SK-N-SH (cell line): ENCODE measurements at regions of chr11 and their contacts with region 1.

Region 1: GRCh38 chr11:75435581-75435945 is 2.6 kb upstream of the KLHL35 start:
- DNase-seq: no peak
- H3K4me3 ChIP-seq: no peak overlapping the region
- H3K27ac ChIP-seq: no peak overlapping the region
- H3K4me1 ChIP-seq: peaks cover 0 to 2% of the 10 kb centered on the region in 2 experiments; a peak in 1 of 4 replicates
- H3K27me3 ChIP-seq: peaks cover 7% of the 10 kb centered on the region
- CTCF ChIP-seq: no peak
- EP300 ChIP-seq: no peak
- RAD21 ChIP-seq: no peak

Region 2: DNA sequence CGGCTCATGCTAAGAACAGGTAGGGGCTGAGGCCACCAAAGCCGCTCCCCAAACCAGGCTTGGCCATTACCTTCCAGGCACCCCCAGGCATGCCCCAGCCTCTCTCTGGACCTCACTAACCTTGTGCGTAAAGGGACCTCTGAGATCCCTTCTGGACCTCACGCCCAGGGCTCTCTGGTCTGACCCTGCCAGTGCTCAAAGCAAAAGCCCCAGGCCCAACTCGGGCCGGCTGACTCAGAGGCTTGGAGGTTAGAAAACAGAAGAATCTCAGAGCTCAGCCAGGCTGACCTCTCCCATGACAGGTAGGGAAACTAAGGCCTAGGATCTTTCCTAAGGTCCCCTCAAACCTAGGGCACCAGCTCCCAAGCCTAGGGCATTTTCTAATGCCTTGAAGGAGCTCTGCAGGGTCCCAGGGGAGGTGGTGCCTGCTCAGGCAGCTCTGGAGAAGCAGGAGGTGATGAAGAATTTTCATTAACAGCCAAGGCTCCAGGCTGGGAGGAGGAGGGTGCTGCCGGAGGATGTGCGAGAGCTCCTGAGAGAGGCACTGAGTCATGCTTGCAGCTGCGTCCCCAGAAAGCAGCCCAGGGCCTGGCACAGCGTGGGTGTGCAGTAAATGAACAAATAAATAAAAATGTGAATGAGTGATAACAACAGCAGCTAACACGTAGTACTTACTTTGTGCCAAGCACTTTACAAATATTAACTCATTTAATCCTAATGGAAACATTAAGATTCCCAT is 109.7 kb before region 1 on chr11:
- CTCF ChIA-PET with region 1: no interaction called
- POLR2A ChIA-PET with region 1: no interaction called
- DNase-seq: no peak
- H3K4me3 ChIP-seq: no peak overlapping the region
- H3K27ac ChIP-seq: no peak overlapping the region
- H3K4me1 ChIP-seq: peaks cover 11 to 22% of the 10 kb centered on the region in 2 experiments; a peak in 3 of 4 replicates
- H3K27me3 ChIP-seq: no peaks in the 10 kb centered on the region
- CTCF ChIP-seq: no peak
- EP300 ChIP-seq: no peak
- RAD21 ChIP-seq: no peak

Region 3: DNA sequence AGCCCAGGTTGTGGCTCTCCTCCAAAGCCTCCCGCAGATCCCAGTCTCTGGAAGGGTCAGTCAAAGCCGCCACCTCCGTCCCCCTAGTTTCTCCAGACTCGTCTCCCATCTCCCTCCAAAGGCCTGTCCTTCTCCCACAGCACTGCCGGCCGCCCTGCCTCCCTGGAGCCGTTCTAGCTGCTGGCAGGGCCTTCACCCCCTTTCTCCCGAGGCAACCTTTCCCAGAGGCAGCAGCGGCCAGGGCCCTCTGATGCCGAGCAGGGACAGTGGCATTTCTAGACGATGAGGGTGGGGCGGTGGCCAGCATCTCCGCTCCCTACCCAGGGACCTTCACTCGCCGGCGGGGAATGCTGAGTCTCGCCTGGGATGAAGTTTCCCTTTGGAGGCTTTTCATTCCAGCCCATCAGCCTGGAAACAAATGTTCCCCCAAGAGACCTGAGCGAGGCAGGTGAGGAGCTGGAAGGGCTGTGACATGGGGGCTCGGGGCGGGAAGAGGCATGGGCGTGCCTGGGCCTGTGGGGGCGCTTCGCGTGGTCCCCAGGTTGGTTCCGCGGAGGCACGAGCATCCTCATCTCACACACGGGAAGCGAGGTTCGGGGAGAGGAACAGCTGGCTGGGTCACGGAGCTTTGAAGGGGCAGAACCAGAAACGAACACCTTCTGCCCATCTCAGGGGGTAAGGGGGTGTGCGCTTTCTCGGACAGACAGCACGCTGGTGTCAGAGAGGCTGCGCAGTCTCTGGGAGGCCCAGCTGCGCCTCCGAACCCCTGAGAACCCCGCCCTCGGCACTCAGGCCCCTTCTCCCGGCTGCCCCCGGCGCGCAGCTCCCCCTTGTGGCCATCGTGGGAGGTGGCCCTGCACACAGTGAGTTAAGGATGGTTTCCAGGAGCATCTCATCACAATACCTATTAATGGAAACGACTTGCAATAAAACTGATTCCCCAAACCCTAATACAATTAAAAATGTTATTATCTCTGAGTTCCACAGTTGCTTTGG is 15.6 kb after region 1 on chr11:
- CTCF ChIA-PET with region 1: interaction called, 66 read pairs
- POLR2A ChIA-PET with region 1: no interaction called
- DNase-seq: peak; percentile 68
- H3K4me3 ChIP-seq: no peak overlapping the region
- H3K27ac ChIP-seq: no peak overlapping the region
- H3K4me1 ChIP-seq: no peaks in the 10 kb centered on the region
- H3K27me3 ChIP-seq: no peaks in the 10 kb centered on the region
- CTCF ChIP-seq: peak; percentile 58
- EP300 ChIP-seq: no peak
- RAD21 ChIP-seq: no peak

Region 4: DNA sequence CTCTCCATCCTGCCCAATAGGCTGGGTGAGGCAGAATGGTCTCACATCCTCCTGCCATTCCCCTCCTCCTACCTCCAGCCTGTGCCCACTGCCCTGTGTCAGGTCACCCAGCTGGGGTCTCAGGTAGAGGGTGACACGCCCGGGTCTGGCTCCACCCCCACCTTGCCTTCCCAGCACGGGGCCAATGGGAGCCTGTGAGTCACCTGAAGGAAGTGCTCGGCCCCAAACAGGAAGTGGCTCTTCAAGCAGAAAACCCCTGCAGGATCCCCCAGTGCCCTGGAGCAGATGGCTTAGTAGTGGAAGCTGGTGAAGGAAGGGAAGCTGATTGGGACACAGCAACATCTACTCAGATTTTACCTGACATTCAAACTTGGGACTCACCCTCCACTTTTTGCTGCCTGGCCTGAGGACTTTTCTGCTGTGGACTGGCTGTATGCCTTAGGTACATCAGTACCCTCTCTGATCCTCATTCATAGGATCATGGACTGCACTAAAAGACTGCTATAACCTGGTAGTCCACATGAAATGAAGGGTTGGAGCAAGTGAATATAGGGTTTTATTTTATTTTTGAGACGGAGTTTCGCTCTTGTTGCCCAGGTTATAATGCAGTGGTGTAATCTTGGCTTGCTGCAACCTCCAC is 56.7 kb after region 1 on chr11:
- CTCF ChIA-PET with region 1: no interaction called
- POLR2A ChIA-PET with region 1: no interaction called
- DNase-seq: no peak
- H3K4me3 ChIP-seq: no peak overlapping the region
- H3K27ac ChIP-seq: no peak overlapping the region
- H3K4me1 ChIP-seq: peaks cover 0 to 6% of the 10 kb centered on the region in 2 experiments; a peak in 2 of 4 replicates
- H3K27me3 ChIP-seq: no peaks in the 10 kb centered on the region
- CTCF ChIP-seq: no peak
- EP300 ChIP-seq: no peak
- RAD21 ChIP-seq: no peak

Region 5: GRCh38 chr11:75786101-75786736 is 350.7 kb after region 1 on chr11:
- CTCF ChIA-PET with region 1: no interaction called
- POLR2A ChIA-PET with region 1: no interaction called
- DNase-seq: no peak
- H3K4me3 ChIP-seq: no peak overlapping the region
- H3K27ac ChIP-seq: no peak overlapping the region
- H3K4me1 ChIP-seq: peaks cover 0 to 6% of the 10 kb centered on the region in 2 experiments; a peak in 1 of 4 replicates
- H3K27me3 ChIP-seq: no peaks in the 10 kb centered on the region
- CTCF ChIP-seq: no peak
- EP300 ChIP-seq: no peak
- RAD21 ChIP-seq: no peak